Activated CD8-positive, alpha-beta T cell treated with anti-CD3 and anti-CD28 coated beads for 36 hours (primary cell): ENCODE measurements at regions of chr11 and their contacts with region 1.

Region 1: DNA sequence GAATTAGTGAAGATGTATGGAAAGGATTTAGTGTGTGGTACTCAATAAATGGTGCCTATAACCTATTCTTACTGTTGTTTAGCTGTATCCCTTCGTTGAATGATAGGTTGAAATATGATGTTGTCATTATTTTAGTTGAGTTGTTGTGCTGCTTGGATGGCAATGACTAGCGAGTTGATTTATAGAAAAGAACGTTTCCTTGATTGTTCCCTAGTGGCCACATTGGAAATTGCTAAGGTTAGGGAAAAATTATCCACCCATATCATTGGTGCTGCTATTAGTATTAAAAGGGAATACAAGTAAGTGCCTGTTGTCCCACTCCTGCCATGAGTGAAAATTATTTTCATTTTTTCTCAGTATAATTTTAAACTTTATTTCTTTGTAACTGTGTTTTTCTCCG is 14.5 kb downstream of the EMSY start:
- DNase-seq: no peak
- ATAC-seq: no peak
- H3K4me3 Mint-ChIP-seq: no peak overlapping the region
- H3K27ac Mint-ChIP-seq: no peak overlapping the region
- H3K4me1 Mint-ChIP-seq: peaks cover 5% of the 10 kb centered on the region
- H3K27me3 Mint-ChIP-seq: no peaks in the 10 kb centered on the region
- CTCF ChIP-seq: peak; percentile 44

Region 2: DNA sequence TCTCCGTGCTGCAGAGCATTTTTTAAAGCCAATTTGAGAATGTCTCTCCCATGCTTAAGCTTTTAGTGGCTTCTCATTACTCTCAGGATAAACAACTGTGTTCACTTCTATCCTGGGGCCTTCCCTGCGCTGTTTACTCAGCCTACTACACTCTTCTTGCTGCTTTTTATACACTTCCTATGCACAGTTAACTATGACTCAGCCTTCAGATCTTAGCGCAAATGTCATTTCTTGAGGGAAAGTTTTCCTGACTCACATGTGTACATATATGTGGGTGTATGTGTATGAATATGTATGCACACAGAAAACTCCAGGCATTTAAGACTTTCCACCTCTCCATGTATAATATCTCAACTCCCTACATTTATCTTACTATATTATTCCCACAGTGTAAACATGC is 88.1 kb before region 1 on chr11:
- CTCF ChIA-PET with region 1: no interaction called
- POLR2A ChIA-PET with region 1: no interaction called
- intact Hi-C with region 1: no loop called
- DNase-seq: peak; percentile 40
- ATAC-seq: peak; percentile 98
- H3K4me3 Mint-ChIP-seq: no peak overlapping the region
- H3K27ac Mint-ChIP-seq: peak overlapping the region; percentile 59
- H3K4me1 Mint-ChIP-seq: peaks cover 62% of the 10 kb centered on the region
- H3K27me3 Mint-ChIP-seq: no peaks in the 10 kb centered on the region
- CTCF ChIP-seq: no peak

Region 3: DNA sequence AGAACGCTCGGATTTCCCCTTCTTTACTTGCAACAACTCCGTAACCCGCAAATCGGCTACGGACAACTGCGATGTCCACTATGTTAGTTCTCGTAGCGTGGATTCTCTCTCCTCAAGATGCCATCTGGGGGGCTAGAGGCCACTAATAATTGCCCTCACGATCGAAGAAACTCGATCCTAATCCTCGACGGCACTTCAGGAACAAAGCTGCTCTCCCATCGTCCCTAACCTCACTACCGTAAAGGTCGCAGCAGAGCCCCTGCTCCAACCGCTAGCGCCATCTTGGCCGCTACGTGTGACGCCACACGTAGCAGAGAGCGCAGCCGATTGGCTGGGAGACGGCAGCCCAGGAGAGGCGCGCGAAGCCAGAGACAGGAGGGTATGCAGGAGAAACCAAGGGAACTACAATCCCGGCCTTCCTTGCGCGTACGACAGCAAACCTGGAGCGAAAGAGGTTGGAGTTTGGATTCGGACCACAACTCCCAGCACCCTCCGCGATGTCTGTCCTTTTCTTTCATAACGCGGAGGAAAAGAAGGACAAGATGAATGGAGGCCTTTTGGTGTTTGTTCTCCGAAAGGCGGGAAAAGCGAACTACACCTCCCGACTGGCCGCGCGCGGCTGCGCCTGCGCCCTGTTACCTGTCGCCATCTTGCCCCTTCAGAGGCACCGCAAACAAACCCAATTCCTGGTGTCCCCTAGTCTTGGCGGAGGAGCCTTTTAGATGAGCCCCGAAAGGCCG is 14.7 kb before region 1 on chr11 and contains the start of gene EMSY:
- CTCF ChIA-PET with region 1: interaction called, 13 read pairs
- POLR2A ChIA-PET with region 1: no interaction called
- intact Hi-C with region 1: no loop called
- DNase-seq: peak; percentile 94
- ATAC-seq: peak; percentile 93
- H3K4me3 Mint-ChIP-seq: peak within 1 kb of the TSS; percentile 84
- H3K27ac Mint-ChIP-seq: peak within 1 kb of the TSS; percentile 91
- H3K4me1 Mint-ChIP-seq: peaks cover 26% of the 10 kb centered on the region
- H3K27me3 Mint-ChIP-seq: no peaks in the 10 kb centered on the region
- CTCF ChIP-seq: no peak
- total RNA-seq, gene EMSY: 29.0 to 31.4 TPM

Region 4: DNA sequence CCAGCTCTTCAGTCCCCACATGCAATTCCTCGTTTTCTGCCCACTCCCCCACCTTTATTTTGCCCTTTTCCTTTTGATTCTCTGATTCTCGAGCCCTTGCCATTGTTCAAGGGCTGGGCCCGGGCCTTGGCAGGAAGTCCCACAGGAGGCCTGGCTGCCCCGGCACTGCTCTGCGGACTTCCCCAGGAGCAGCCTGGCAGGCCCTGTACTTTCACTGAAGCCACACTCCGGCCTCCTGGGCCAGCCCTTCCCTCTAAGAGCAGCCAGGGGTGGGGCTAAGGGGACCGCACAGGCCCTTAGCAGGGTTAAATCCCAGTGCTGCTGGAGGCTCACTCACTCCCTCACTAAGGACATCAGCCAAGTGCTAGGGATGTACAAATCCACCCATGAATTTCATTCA is 207.1 kb after region 1 on chr11:
- CTCF ChIA-PET with region 1: no interaction called
- POLR2A ChIA-PET with region 1: no interaction called
- intact Hi-C with region 1: no loop called
- DNase-seq: no peak
- ATAC-seq: no peak
- H3K4me3 Mint-ChIP-seq: peak overlapping the region; percentile 73
- H3K27ac Mint-ChIP-seq: no peak overlapping the region
- H3K4me1 Mint-ChIP-seq: peaks cover 38% of the 10 kb centered on the region
- H3K27me3 Mint-ChIP-seq: peaks cover 15% of the 10 kb centered on the region
- CTCF ChIP-seq: no peak